ENCODE measurements at regions of chr7 and their contacts with region 1.

Region 1: DNA sequence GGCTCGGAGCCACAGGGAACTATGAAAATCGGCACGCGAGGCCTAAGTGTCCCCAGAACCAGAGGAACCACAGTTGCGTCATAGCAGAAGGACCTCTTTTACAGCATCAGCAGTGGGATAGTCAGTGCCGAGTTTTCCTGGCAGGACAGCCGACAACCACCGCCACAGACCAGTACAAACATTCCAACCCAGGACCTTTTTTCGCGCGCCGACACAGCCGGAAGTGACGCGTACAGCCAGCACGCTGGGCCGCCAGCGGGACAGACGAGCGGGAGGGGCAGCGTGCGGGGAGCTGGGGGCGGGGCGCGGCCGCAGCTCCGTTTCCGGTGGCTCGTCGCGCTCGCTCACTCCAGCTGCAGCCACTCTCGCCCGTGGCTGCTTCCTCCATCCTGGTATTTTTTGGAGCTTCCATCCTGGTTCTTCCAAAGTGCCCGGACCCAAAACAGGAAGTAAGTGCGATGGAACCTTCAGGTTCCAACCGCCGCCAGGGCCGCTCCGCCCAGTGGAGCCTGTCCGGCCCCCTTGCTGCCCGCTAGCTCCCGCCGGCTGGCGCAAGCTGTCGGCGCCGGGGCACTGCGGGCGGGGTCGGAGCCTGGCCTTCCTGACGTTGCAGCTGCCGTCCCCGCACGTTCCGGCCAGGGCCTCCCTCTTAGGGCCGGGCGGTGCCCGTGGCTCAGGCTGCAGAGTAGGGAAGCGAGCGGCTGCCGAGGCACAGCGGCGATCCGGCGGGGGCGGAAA is at the start of gene DMTF1:
- DNase-seq: peak; percentile 79 to 97
- H3K4me3 ChIP-seq: peak within 1 kb of the TSS; percentile 81 to 88
- H3K27ac ChIP-seq: peak within 1 kb of the TSS; percentile 96 to 99
- H3K4me1 ChIP-seq: peaks cover 3 to 21% of the 10 kb centered on the region in 2 donors
- H3K27me3 ChIP-seq: no peaks in the 10 kb centered on the region
- CTCF ChIP-seq: no peak
- total RNA-seq, gene DMTF1: 23.1 TPM

Region 2: GRCh38 chr7:86932038-86932512 is 220.2 kb before region 1 on chr7:
- intact Hi-C with region 1: loop called (anchors 2 kb)
- DNase-seq: peak in 1 of 2 donors; percentile 81
- H3K4me3 ChIP-seq: no peak overlapping the region
- H3K27ac ChIP-seq: peak overlapping the region in 1 of 2 donors; percentile 68
- H3K4me1 ChIP-seq: peaks cover 0 to 2% of the 10 kb centered on the region in 2 donors
- H3K27me3 ChIP-seq: no peaks in the 10 kb centered on the region
- CTCF ChIP-seq: no peak

Region 3: GRCh38 chr7:87219545-87220025 is 67.3 kb after region 1 on chr7 and contains the start of gene TMEM243:
- intact Hi-C with region 1: loop called (anchors 1 kb)
- DNase-seq: peak; percentile 39 to 90
- H3K4me3 ChIP-seq: peak within 1 kb of the TSS; percentile 95 to 98
- H3K27ac ChIP-seq: peak within 1 kb of the TSS; percentile 90 to 91
- H3K4me1 ChIP-seq: peaks cover 2 to 8% of the 10 kb centered on the region in 2 donors
- H3K27me3 ChIP-seq: no peaks in the 10 kb centered on the region
- CTCF ChIP-seq: peak in 1 of 3 experiments; percentile 5
- total RNA-seq, gene TMEM243: 27.5 TPM

Region 4: DNA sequence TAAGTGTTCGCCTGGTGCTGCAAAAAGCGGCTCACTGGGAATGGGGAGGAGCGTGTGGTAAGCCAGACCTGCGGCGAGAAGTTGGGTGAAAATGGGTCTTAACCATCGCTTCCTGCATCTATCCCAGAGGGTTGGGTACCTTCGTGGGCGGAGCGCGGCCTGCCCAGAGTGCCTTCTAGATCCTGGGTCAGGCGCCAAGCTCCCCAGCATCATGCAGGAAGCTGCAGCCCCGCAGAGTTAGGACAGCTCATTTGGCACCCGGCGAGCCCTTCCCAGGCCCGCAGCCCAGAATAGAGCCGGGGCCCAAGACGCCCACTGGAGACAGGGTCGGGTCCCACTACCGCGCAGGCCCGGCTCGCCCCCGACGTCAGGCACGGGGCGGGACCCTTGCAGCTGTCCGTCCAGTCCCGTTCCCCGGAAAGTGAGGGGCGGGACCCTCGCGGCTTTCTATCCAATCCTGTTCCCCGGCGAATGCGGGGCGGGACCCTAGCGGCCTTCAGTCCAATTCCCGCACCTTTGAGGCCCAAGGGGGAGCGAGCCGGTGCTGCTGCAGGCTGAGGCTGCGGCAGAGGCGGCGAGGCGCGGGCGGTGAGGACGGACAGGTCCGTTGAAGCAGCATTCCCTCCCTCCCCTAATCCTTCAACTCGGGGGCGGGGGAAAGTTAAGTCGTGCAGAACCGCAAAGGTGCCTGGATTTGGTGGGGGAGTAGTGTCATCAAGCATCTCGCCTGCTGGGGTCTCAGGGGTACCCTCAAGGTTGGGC is 193.1 kb after region 1 on chr7 and contains the start of gene CROT:
- intact Hi-C with region 1: loop called (anchors 2 kb)
- DNase-seq: peak; percentile 89 to 98
- H3K4me3 ChIP-seq: peak within 1 kb of the TSS; percentile 52 to 73
- H3K27ac ChIP-seq: peak within 1 kb of the TSS; percentile 74 to 83
- H3K4me1 ChIP-seq: peaks cover 0 to 11% of the 10 kb centered on the region in 2 donors
- H3K27me3 ChIP-seq: no peaks in the 10 kb centered on the region
- CTCF ChIP-seq: peak in 1 of 3 experiments; percentile 8
- total RNA-seq, gene CROT: 3.0 TPM

Region 5: DNA sequence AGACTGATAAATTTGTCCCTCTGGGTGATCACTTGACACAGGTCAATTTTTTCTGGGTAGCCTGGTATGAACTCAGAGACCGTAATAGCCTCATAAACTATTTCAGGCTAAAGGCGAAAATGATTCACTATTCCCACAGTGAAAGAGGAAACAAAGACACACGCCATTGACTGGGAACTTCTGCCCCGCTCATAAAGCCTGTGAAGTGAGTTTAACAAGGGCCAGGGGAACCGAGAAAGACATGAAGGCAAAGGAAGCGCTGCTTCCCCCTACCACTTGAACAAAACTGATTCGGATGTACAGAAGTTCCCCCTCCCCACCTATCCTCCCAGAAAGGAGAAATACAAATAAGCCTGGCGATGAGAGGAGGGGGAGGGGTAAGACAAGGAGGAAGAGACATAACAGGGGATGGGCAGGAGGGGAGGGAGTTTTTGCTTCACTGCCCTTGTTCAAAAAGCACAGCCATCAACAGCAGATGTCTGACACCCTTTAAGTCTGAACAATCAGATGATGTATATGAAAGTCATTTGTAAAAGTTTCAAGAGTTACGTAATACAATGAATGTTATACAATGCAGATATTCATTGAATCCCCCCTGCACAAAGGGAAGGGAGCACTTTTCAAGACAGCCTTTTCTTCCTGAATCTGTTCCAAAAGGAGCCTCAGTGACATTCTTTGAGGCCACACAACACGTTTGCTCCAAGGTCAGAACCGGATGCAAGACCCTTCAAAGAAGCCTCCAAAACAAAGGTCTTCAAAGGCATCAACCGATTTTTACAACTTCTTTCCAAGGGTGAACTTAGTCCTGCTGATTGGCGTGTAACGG is 322.5 kb after region 1 on chr7:
- intact Hi-C with region 1: loop called (anchors 5 kb)
- DNase-seq: peak in 1 of 2 donors; percentile 73
- H3K4me3 ChIP-seq: peak overlapping the region; percentile 72 to 88
- H3K27ac ChIP-seq: peak overlapping the region; percentile 23 to 66
- H3K4me1 ChIP-seq: no peaks in the 10 kb centered on the region
- H3K27me3 ChIP-seq: no peaks in the 10 kb centered on the region
- CTCF ChIP-seq: no peak

Region 6: DNA sequence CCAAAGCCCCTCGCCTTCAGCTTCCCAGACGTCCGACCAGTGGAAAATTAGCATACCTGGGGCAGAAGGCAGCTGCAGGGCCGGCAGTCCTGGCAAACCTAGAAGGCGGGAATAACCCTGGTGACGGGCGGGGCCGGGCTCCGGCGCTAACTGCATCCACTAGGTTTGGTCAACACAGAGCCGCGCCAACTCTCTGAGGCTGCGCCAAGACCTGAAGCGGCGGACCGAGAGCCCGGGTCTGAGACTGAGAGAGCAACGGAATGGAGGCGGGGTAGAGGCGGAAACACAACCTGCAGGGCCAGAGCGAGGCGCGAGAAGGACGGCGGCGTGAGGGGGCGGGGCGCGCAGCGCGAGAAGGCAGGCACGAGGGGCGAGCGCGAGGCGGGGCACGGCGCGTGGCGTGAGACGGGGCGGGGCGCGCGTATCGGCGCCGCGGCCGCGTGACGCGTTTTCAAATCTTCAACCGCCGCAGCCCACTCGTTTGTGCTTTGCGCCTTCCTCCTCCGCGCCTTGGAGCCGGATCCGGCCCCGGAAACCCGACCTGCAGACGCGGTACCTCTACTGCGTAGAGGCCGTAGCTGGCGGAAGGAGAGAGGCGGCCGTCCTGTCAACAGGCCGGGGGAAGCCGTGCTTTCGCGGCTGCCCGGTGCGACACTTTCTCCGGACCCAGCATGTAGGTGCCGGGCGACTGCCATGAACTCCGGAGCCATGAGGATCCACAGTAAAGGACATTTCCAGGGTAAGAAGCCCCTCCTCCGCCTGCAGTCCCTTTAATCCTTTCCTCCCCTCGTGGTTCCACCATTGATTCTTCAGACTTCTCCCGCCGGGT is 724.0 kb after region 1 on chr7 and contains the starts of genes DBF4 and SLC25A40:
- intact Hi-C with region 1: loop called (anchors 2 kb)
- DNase-seq: peak; percentile 78 to 96
- H3K4me3 ChIP-seq: peak within 1 kb of the TSS; percentile 63 to 76
- H3K27ac ChIP-seq: peak within 1 kb of the TSS; percentile 90 to 91
- H3K4me1 ChIP-seq: peaks cover 0 to 4% of the 10 kb centered on the region in 2 donors
- H3K27me3 ChIP-seq: no peaks in the 10 kb centered on the region
- CTCF ChIP-seq: no peak
- total RNA-seq, gene DBF4: not detected
- total RNA-seq, gene SLC25A40: 4.0 TPM

Measured in ascending aorta (tissue), 2 donors.